ENCODE measurements at regions of chr2 and their contacts with region 1.

Region 1: GRCh38 chr2:204024503-204024902 is 87.9 kb downstream of the ICOS start:
- DNase-seq: no peak
- H3K4me3 ChIP-seq: no peak overlapping the region
- H3K27ac ChIP-seq: no peak overlapping the region
- H3K4me1 ChIP-seq: no peaks in the 10 kb centered on the region
- H3K27me3 ChIP-seq: no peaks in the 10 kb centered on the region
- CTCF ChIP-seq: peak; percentile 55

Region 2: GRCh38 chr2:205947621-205948495 is 1923.4 kb after region 1 on chr2:
- CTCF ChIA-PET with region 1: no interaction called
- POLR2A ChIA-PET with region 1: no interaction called
- intact Hi-C with region 1: loop called (anchors 2 kb)
- DNase-seq: peak in 1 of 2 experiments; percentile 41
- H3K4me3 ChIP-seq: peak overlapping the region; percentile 14; the same call in 1 of the 2 replicates
- H3K27ac ChIP-seq: no peak overlapping the region
- H3K4me1 ChIP-seq: no peaks in the 10 kb centered on the region
- H3K27me3 ChIP-seq: no peaks in the 10 kb centered on the region
- CTCF ChIP-seq: peak; percentile 87

Measured in PC-9 (cell line).